Activated CD4-positive, alpha-beta memory T cell treated with anti-CD3 and anti-CD28 coated beads for 36 hours (primary cell): ENCODE measurements at regions of chr15 and their contacts with region 1.

Region 1: GRCh38 chr15:57306161-57306943 is 70.0 kb upstream of the CGNL1 start:
- DNase-seq: peak; percentile 86
- H3K4me3 Mint-ChIP-seq: peak overlapping the region; percentile 28
- H3K27ac Mint-ChIP-seq: no peak overlapping the region
- H3K4me1 Mint-ChIP-seq: peaks cover 6% of the 10 kb centered on the region
- H3K27me3 Mint-ChIP-seq: peaks cover 5% of the 10 kb centered on the region

Region 2: GRCh38 chr15:56491110-56491722 is 815.1 kb before region 1 on chr15:
- CTCF ChIA-PET with region 1: interaction called, 31 read pairs
- POLR2A ChIA-PET with region 1: no interaction called
- intact Hi-C with region 1: loop called (anchors 1 kb)
- DNase-seq: peak; percentile 69
- H3K4me3 Mint-ChIP-seq: no peak overlapping the region
- H3K27ac Mint-ChIP-seq: no peak overlapping the region
- H3K4me1 Mint-ChIP-seq: no peaks in the 10 kb centered on the region
- H3K27me3 Mint-ChIP-seq: peaks cover 2% of the 10 kb centered on the region

Region 3: DNA sequence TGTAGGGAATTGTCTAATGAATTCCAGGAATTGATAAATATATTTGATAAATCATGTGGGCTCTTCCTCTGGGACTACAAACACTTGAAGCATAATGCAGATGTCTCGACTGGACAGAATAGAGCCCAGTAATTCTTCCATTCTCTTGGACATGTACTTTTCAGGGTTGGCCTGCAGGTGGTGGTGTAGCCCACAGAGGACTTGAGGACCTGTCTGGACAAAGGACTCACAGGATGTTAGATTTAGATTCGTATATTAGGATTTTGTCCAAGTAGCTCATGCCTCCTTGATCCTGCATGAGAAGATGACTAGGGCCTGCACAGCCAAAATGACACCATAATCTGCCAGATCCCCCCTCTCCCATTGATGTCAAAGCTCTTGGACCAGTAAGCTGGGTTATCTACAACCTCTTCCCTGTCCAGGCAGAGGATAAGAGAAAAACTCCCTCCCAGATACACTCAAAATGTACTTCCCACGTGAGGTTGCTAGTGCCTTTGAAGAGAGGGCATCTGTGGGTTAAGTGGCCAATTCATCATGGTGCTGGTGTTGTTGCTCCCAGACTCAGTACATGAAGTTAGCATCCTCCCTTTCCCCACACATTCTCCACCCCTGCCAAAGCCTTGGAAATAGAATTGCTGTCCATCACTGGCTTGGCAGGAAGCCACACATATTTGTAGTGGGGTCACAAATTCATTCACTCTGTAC is 484.5 kb before region 1 on chr15:
- CTCF ChIA-PET with region 1: interaction called, 9 read pairs
- POLR2A ChIA-PET with region 1: no interaction called
- intact Hi-C with region 1: loop called (anchors 1 kb)
- DNase-seq: peak; percentile 53
- H3K4me3 Mint-ChIP-seq: no peak overlapping the region
- H3K27ac Mint-ChIP-seq: no peak overlapping the region
- H3K4me1 Mint-ChIP-seq: no peaks in the 10 kb centered on the region
- H3K27me3 Mint-ChIP-seq: no peaks in the 10 kb centered on the region

Region 4: GRCh38 chr15:56918046-56918938 is 388.1 kb before region 1 on chr15 and contains the start of gene TCF12:
- CTCF ChIA-PET with region 1: interaction called, 9 read pairs
- POLR2A ChIA-PET with region 1: no interaction called
- intact Hi-C with region 1: loop called (anchors 5 kb)
- DNase-seq: peak; percentile 94
- H3K4me3 Mint-ChIP-seq: peak within 1 kb of the TSS; percentile 81
- H3K27ac Mint-ChIP-seq: peak within 1 kb of the TSS; percentile 82
- H3K4me1 Mint-ChIP-seq: peaks cover 30% of the 10 kb centered on the region
- H3K27me3 Mint-ChIP-seq: no peaks in the 10 kb centered on the region
- total RNA-seq, gene TCF12: 63.7 to 64.6 TPM

Region 5: DNA sequence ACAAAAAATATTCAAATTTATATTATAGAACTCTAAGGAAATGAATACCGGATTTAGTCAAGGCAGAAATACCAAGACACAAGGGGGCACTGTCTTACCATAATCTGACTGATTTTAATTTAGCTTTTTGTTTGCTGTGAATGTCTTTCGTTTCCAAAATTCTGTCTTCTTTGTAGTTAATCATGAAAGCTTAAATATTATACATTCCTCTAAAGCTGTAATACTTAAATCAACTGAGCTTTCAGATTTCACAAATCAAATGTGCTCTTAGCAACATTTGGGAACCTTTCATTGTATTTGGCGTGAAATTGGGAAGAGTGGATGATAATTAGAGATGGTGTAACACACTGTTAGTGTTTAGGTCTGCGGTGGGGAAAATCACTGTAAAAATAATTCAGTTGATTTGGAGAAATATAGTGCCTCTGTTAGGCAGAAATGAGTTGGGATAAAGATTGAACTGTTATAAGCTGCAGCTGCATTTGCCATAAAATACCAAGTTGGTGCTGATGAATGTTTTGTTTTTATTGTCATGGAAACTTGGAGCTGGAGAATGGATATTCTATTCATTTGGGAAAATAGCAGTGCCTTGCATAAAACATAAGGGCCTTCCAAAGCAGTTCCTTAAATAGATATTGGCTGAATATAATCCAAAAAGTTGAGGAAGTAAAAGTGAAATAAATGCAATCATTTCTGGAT is 159.7 kb before region 1 on chr15:
- CTCF ChIA-PET with region 1: interaction called, 88 read pairs
- POLR2A ChIA-PET with region 1: no interaction called
- intact Hi-C with region 1: loop called (anchors 1 kb)
- DNase-seq: no peak
- H3K4me3 Mint-ChIP-seq: no peak overlapping the region
- H3K27ac Mint-ChIP-seq: no peak overlapping the region
- H3K4me1 Mint-ChIP-seq: peaks cover 4% of the 10 kb centered on the region
- H3K27me3 Mint-ChIP-seq: no peaks in the 10 kb centered on the region

Region 6: DNA sequence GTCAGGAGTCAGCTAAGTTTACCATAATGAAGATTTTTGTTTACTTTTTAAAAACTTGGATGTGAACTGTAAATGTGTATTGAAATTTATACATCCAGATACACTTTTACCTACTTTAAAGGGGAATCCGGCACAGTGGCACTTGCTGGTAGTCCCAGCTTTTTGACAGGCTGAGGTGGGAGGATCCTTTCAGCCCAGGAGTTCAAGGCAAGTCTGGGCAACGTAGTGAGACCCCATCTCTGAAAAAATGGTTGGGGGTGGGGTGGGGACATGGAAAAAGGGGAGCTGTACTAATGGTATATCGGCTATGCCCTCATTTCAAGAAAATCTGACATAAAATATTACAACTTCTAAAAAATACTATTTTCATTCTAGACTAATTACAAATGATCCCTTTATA is 25.9 kb before region 1 on chr15:
- CTCF ChIA-PET with region 1: no interaction called
- POLR2A ChIA-PET with region 1: no interaction called
- intact Hi-C with region 1: no loop called
- DNase-seq: no peak
- H3K4me3 Mint-ChIP-seq: no peak overlapping the region
- H3K27ac Mint-ChIP-seq: no peak overlapping the region
- H3K4me1 Mint-ChIP-seq: no peaks in the 10 kb centered on the region
- H3K27me3 Mint-ChIP-seq: no peaks in the 10 kb centered on the region